CD4-positive, alpha-beta T cell (primary cell): ENCODE measurements at regions of chr22 and their contacts with region 1.

Region 1: GRCh38 chr22:42270512-42271417 is at the start of gene TCF20:
- DNase-seq: peak; percentile 58 to 92 (median 74)
- ATAC-seq: peak; percentile 79
- H3K4me3 ChIP-seq: peak within 1 kb of the TSS; percentile 85
- H3K4me3 Mint-ChIP-seq: peak within 1 kb of the TSS; percentile 95
- H3K27ac ChIP-seq: peak within 1 kb of the TSS; percentile 60 to 85
- H3K27ac Mint-ChIP-seq: peak within 1 kb of the TSS; percentile 87
- H3K4me1 ChIP-seq: peaks cover 43% of the 10 kb centered on the region
- H3K4me1 Mint-ChIP-seq: peaks cover 35% of the 10 kb centered on the region
- H3K27me3 ChIP-seq: no peaks in the 10 kb centered on the region
- H3K27me3 Mint-ChIP-seq: no peaks in the 10 kb centered on the region
- CTCF ChIP-seq: no peak
- total RNA-seq, gene TCF20: 61.6 to 64.1 TPM

Region 2: GRCh38 chr22:42151924-42152635 is 118.7 kb before region 1 on chr22:
- CTCF ChIA-PET with region 1: no interaction called
- POLR2A ChIA-PET with region 1: no interaction called
- intact Hi-C with region 1: no loop called
- DNase-seq: no peak
- ATAC-seq: no peak
- H3K4me3 ChIP-seq: no peak overlapping the region
- H3K4me3 Mint-ChIP-seq: no peak overlapping the region
- H3K27ac ChIP-seq: no peak overlapping the region
- H3K27ac Mint-ChIP-seq: no peak overlapping the region
- H3K4me1 ChIP-seq: no peaks in the 10 kb centered on the region
- H3K4me1 Mint-ChIP-seq: no peaks in the 10 kb centered on the region
- H3K27me3 ChIP-seq: no peaks in the 10 kb centered on the region
- H3K27me3 Mint-ChIP-seq: no peaks in the 10 kb centered on the region
- CTCF ChIP-seq: no peak

Region 3: GRCh38 chr22:42180349-42180842 is 90.4 kb before region 1 on chr22:
- CTCF ChIA-PET with region 1: no interaction called
- POLR2A ChIA-PET with region 1: no interaction called
- intact Hi-C with region 1: loop called in 1 of 2 experiments (anchors 1 kb)
- DNase-seq: peak; percentile 22 to 89 (median 41)
- ATAC-seq: peak; percentile 96
- H3K4me3 ChIP-seq: no peak overlapping the region
- H3K4me3 Mint-ChIP-seq: peak overlapping the region; percentile 73
- H3K27ac ChIP-seq: peak overlapping the region; percentile 44 to 65
- H3K27ac Mint-ChIP-seq: peak overlapping the region; percentile 92
- H3K4me1 ChIP-seq: peaks cover 72% of the 10 kb centered on the region
- H3K4me1 Mint-ChIP-seq: peaks cover 88% of the 10 kb centered on the region
- H3K27me3 ChIP-seq: no peaks in the 10 kb centered on the region
- H3K27me3 Mint-ChIP-seq: no peaks in the 10 kb centered on the region
- CTCF ChIP-seq: no peak

Region 4: DNA sequence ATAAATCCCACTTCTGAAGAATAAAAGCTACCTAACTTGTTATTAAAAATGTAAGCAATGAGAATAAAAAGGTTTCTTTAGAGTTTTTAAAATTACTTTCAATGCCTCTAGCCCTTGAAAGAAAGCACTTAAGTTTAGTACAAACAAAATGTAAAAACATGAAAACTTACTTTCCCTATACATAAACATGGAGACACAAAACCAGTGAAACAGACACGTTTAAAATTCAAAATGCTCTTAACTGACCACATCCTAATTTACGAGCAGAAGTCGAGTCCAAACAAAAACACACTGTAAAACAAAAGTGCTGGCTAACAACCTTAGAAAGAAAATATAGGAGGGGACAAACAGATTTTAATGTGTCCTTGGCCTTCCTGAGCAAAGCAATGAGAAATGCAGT is 36.9 kb before region 1 on chr22:
- CTCF ChIA-PET with region 1: no interaction called
- POLR2A ChIA-PET with region 1: no interaction called
- intact Hi-C with region 1: loop called in 1 of 2 experiments (anchors 1 kb)
- DNase-seq: no peak
- ATAC-seq: no peak
- H3K4me3 ChIP-seq: no peak overlapping the region
- H3K4me3 Mint-ChIP-seq: no peak overlapping the region
- H3K27ac ChIP-seq: no peak overlapping the region
- H3K27ac Mint-ChIP-seq: peak overlapping the region; percentile 11
- H3K4me1 ChIP-seq: peaks cover 15% of the 10 kb centered on the region
- H3K4me1 Mint-ChIP-seq: peaks cover 78% of the 10 kb centered on the region
- H3K27me3 ChIP-seq: no peaks in the 10 kb centered on the region
- H3K27me3 Mint-ChIP-seq: no peaks in the 10 kb centered on the region
- CTCF ChIP-seq: no peak

Region 5: GRCh38 chr22:42296381-42296853 is 25.7 kb after region 1 on chr22:
- CTCF ChIA-PET with region 1: no interaction called
- POLR2A ChIA-PET with region 1: interaction called, 5 read pairs
- intact Hi-C with region 1: loop called in 1 of 2 experiments (anchors 2 kb)
- DNase-seq: peak in 7 of 14 experiments; percentile 10 to 55 (median 18)
- ATAC-seq: no peak
- H3K4me3 ChIP-seq: no peak overlapping the region
- H3K4me3 Mint-ChIP-seq: no peak overlapping the region
- H3K27ac ChIP-seq: peak overlapping the region; percentile 15 to 30
- H3K27ac Mint-ChIP-seq: peak overlapping the region; percentile 90
- H3K4me1 ChIP-seq: peaks cover 83% of the 10 kb centered on the region
- H3K4me1 Mint-ChIP-seq: peaks cover 85% of the 10 kb centered on the region
- H3K27me3 ChIP-seq: no peaks in the 10 kb centered on the region
- H3K27me3 Mint-ChIP-seq: no peaks in the 10 kb centered on the region
- CTCF ChIP-seq: peak; percentile 18

Region 6: GRCh38 chr22:42343551-42344081 is 72.9 kb after region 1 on chr22:
- CTCF ChIA-PET with region 1: no interaction called
- POLR2A ChIA-PET with region 1: no interaction called
- intact Hi-C with region 1: loop called in 1 of 2 experiments (anchors 5 kb)
- DNase-seq: peak in 7 of 14 experiments; percentile 11 to 70 (median 36)
- ATAC-seq: peak; percentile 79
- H3K4me3 ChIP-seq: no peak overlapping the region
- H3K4me3 Mint-ChIP-seq: no peak overlapping the region
- H3K27ac ChIP-seq: no peak overlapping the region
- H3K27ac Mint-ChIP-seq: no peak overlapping the region
- H3K4me1 ChIP-seq: peaks cover 18% of the 10 kb centered on the region
- H3K4me1 Mint-ChIP-seq: peaks cover 23% of the 10 kb centered on the region
- H3K27me3 ChIP-seq: peaks cover 0 to 2% of the 10 kb centered on the region in 2 experiments
- H3K27me3 Mint-ChIP-seq: no peaks in the 10 kb centered on the region
- CTCF ChIP-seq: no peak

Region 7: GRCh38 chr22:42369245-42370041 is 98.7 kb after region 1 on chr22:
- CTCF ChIA-PET with region 1: no interaction called
- POLR2A ChIA-PET with region 1: no interaction called
- intact Hi-C with region 1: loop called in 1 of 2 experiments (anchors 2 kb)
- DNase-seq: peak; percentile 66 to 91 (median 78)
- ATAC-seq: peak; percentile 94
- H3K4me3 ChIP-seq: peak overlapping the region; percentile 66
- H3K4me3 Mint-ChIP-seq: peak overlapping the region; percentile 88
- H3K27ac ChIP-seq: no peak overlapping the region
- H3K27ac Mint-ChIP-seq: peak overlapping the region; percentile 27
- H3K4me1 ChIP-seq: peaks cover 24% of the 10 kb centered on the region
- H3K4me1 Mint-ChIP-seq: peaks cover 18% of the 10 kb centered on the region
- H3K27me3 ChIP-seq: peaks cover 23 to 33% of the 10 kb centered on the region in 2 experiments
- H3K27me3 Mint-ChIP-seq: peaks cover 39% of the 10 kb centered on the region
- CTCF ChIP-seq: no peak